Activated CD4-positive, alpha-beta memory T cell treated with anti-CD3 and anti-CD28 coated beads for 36 hours (primary cell): ENCODE measurements at regions of chr1 and their contacts with region 1.

Region 1: GRCh38 chr1:2300851-2301606 is 72.9 kb downstream of the SKI start:
- DNase-seq: peak; percentile 95
- H3K4me3 Mint-ChIP-seq: peak overlapping the region; percentile 75
- H3K27ac Mint-ChIP-seq: peak overlapping the region; percentile 98
- H3K4me1 Mint-ChIP-seq: peaks cover 53% of the 10 kb centered on the region
- H3K27me3 Mint-ChIP-seq: no peaks in the 10 kb centered on the region

Region 2: GRCh38 chr1:2227346-2228153 is 73.5 kb before region 1 on chr1:
- CTCF ChIA-PET with region 1: interaction called, 7 read pairs
- POLR2A ChIA-PET with region 1: interaction called, 30 read pairs
- intact Hi-C with region 1: loop called (anchors 1 kb)
- DNase-seq: peak; percentile 97
- H3K4me3 Mint-ChIP-seq: peak overlapping the region; percentile 55
- H3K27ac Mint-ChIP-seq: no peak overlapping the region
- H3K4me1 Mint-ChIP-seq: peaks cover 9% of the 10 kb centered on the region
- H3K27me3 Mint-ChIP-seq: peaks cover 1% of the 10 kb centered on the region

Region 3: DNA sequence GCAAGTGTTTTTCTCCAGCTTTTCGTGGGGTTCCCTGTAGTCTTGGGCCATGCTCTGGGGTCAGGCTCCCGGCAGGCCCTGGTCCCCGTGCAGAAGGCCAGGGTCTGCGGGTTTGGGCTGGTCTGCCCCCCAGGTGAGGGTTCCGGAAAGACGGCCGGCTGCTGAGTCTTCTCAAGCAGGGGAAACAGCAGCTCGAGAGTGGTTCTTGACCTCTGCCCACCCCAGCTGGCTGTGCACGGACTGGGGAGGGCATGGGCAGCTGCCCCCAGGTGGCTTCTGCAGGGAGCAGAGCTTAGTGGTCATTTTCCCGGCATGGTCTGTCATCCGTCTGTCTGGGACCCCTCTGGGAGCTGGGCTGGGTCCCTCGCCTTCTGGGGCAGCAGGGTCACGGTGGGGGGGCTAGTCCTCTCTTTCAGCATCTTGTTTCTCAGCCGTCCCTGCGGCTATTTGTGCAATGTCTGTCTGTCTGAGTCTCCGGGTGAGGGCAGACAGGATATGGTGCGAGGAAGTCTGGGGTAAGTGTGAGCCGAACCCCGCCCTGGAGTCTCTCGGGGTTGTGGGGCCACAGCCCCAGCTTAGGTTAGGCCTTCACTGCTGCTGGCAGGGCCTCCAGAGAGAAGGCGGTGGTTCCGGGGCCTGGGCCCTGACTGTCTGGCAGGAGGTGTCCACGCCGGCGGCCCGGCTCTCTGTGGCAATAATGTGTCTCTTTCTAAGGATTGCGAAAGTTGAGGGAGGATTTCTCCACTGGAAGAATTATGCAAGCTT is 66.8 kb before region 1 on chr1:
- CTCF ChIA-PET with region 1: interaction called, 7 read pairs
- POLR2A ChIA-PET with region 1: interaction called, 30 read pairs
- intact Hi-C with region 1: loop called (anchors 1 kb)
- DNase-seq: peak; percentile 83
- H3K4me3 Mint-ChIP-seq: peak overlapping the region; percentile 99
- H3K27ac Mint-ChIP-seq: peak overlapping the region; percentile 94
- H3K4me1 Mint-ChIP-seq: peaks cover 65% of the 10 kb centered on the region
- H3K27me3 Mint-ChIP-seq: no peaks in the 10 kb centered on the region

Region 4: GRCh38 chr1:2255420-2256369 is 45.3 kb before region 1 on chr1:
- CTCF ChIA-PET with region 1: interaction called, 3 read pairs
- POLR2A ChIA-PET with region 1: interaction called, 16 read pairs
- intact Hi-C with region 1: loop called (anchors 1 kb)
- DNase-seq: peak; percentile 89
- H3K4me3 Mint-ChIP-seq: no peak overlapping the region
- H3K27ac Mint-ChIP-seq: no peak overlapping the region
- H3K4me1 Mint-ChIP-seq: peaks cover 51% of the 10 kb centered on the region
- H3K27me3 Mint-ChIP-seq: no peaks in the 10 kb centered on the region

Region 5: GRCh38 chr1:2279210-2279639 is 21.8 kb before region 1 on chr1:
- CTCF ChIA-PET with region 1: no interaction called
- POLR2A ChIA-PET with region 1: no interaction called
- intact Hi-C with region 1: no loop called
- DNase-seq: no peak
- H3K4me3 Mint-ChIP-seq: no peak overlapping the region
- H3K27ac Mint-ChIP-seq: peak overlapping the region; percentile 23
- H3K4me1 Mint-ChIP-seq: peaks cover 35% of the 10 kb centered on the region
- H3K27me3 Mint-ChIP-seq: no peaks in the 10 kb centered on the region

Region 6: GRCh38 chr1:2290595-2291510 is 10.2 kb before region 1 on chr1:
- CTCF ChIA-PET with region 1: interaction called, 19 read pairs
- POLR2A ChIA-PET with region 1: interaction called, 53 read pairs
- intact Hi-C with region 1: loop called (anchors 1 kb)
- DNase-seq: peak; percentile 94
- H3K4me3 Mint-ChIP-seq: peak overlapping the region; percentile 70
- H3K27ac Mint-ChIP-seq: peak overlapping the region; percentile 96
- H3K4me1 Mint-ChIP-seq: peaks cover 81% of the 10 kb centered on the region
- H3K27me3 Mint-ChIP-seq: no peaks in the 10 kb centered on the region

Region 7: DNA sequence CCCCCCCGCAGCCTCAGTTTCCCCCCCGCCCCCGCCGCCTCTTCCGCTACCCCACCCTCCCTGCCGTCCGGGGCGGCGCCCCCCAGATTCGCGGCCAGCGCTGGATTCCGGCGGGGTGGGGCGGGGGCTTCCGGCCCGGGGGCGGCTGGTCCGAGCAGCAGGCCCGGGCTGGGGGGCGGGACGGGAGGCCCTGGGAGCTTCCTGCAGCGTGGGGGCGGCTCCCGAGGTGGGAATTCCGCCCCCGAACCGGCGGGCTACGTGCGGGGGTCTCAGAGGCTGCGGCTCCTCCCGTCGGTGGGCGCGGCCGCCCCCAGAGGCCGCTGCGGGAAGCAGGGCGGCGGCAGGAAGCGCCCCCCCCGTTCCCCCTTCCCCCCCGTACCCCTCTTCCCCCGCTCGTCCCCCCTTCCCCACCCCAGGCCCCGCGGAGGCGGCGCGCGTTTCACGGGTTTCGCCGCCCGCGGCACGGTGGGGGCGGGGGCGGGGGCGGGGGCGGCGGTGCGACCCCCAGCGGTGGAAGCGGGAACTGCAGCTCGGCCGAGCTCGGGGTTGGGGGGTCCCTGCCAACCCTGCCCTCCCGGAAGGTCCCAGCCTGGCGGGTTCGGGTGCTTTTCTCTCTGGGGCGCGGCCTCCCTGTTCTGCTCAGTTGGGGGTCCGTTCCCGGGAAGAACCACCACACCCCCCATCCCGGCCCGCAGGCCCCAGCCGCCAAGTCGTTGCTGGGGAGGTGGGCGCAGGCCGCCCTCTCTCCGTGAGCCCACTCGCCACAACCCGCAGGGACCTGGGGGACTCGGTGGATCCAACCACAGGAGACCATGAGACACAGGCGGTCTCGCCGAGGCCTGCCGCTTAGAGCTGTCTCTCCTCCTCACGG is 14.0 kb after region 1 on chr1:
- CTCF ChIA-PET with region 1: interaction called, 9 read pairs
- POLR2A ChIA-PET with region 1: interaction called, 3 read pairs
- intact Hi-C with region 1: loop called (anchors 1 kb)
- DNase-seq: peak; percentile 70
- H3K4me3 Mint-ChIP-seq: peak overlapping the region; percentile 5
- H3K27ac Mint-ChIP-seq: peak overlapping the region; percentile 8
- H3K4me1 Mint-ChIP-seq: no peaks in the 10 kb centered on the region
- H3K27me3 Mint-ChIP-seq: no peaks in the 10 kb centered on the region

Region 8: DNA sequence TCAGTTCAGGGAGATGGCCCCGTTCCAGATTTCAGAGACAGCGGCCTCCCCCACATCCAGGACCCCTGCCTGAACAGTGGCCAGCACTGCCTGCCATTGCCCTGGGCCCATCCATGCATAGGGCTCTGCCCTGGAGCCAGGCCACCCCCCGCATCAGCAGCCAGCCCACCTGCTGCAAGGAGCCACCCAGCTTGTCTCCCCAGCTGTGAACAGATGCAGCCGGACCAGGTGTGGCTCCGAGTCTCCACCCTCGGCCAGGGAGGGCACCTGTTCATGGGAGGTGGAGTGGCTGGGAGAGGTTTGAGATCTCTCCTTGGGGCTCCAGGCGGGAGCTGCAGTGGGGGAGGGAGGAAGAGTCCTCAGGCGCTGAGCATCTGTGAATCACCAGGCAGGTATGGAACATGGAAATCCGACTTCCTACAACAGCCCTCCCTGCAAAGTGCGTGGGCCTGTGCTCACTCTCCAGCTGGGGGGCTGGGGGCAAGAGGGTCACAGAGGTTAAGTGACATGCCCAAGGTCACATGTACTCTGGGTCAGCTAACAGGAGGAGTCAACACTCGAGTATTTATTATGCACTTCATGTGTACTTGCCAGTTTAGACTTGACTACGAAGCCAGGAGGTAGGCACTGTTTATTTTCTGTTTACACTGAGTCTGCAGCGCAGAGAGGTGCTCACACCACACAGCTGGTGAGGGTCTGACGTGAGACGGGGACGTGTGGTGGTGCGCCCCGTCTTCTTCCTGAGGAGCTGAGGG is 233.8 kb after region 1 on chr1:
- CTCF ChIA-PET with region 1: no interaction called
- POLR2A ChIA-PET with region 1: no interaction called
- intact Hi-C with region 1: no loop called
- DNase-seq: no peak
- H3K4me3 Mint-ChIP-seq: no peak overlapping the region
- H3K27ac Mint-ChIP-seq: no peak overlapping the region
- H3K4me1 Mint-ChIP-seq: peaks cover 3% of the 10 kb centered on the region
- H3K27me3 Mint-ChIP-seq: peaks cover 8% of the 10 kb centered on the region

Region 9: DNA sequence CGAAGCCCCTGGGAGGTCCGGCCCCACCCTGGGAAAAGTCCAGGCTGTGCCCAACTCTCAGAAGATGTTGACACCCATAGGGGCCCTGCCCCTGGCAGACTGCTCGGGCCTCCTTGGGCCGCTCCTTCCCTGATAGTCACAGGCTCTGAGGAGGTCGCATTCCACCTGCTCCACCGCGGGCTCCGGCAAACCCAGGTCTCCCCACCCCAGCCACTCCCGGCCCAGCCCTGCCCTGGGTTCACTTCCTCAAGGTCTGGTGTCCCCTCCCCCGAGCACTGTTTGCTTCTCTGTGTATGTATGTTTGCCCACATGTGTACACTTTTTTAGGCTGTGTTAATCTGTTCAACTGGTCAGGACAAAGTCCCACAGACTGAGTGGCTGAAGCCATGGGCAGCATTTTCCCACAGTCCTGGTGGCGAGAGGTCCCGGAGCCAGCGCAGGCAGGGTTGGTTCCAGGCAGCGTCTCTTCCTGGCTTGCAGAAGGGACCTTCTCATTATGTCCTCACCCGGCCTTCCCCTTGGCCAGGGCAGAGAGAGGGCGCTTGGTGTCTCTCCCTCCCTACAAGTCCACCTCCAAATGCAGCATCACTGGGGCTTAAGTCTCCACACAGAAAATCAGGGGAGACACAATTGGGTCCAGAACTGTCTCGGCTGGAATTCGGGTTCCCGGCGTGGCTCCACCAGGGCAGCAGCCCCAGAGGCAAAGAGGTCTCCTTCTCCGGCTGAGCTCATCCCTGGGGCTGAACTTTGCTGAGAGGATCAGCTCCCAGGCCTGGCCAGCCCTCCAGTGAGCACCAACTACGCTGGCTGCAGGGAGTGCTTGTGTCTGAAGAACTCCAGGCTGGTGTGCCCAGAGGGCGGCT is 275.0 kb after region 1 on chr1:
- CTCF ChIA-PET with region 1: no interaction called
- POLR2A ChIA-PET with region 1: no interaction called
- intact Hi-C with region 1: loop called (anchors 1 kb)
- DNase-seq: no peak
- H3K4me3 Mint-ChIP-seq: no peak overlapping the region
- H3K27ac Mint-ChIP-seq: peak overlapping the region; percentile 97
- H3K4me1 Mint-ChIP-seq: peaks cover 39% of the 10 kb centered on the region
- H3K27me3 Mint-ChIP-seq: no peaks in the 10 kb centered on the region